PC-9 (cell line): ENCODE measurements at regions of chr7 and their contacts with region 1.

Region 1: GRCh38 chr7:132030086-132030568 is 473.7 kb upstream of the PODXL start:
- DNase-seq: peak in 1 of 2 experiments; percentile 69
- H3K4me3 ChIP-seq: no peak overlapping the region; the same call in 1 of the 2 replicates
- H3K27ac ChIP-seq: peak overlapping the region; percentile 66
- H3K4me1 ChIP-seq: peaks cover 38% of the 10 kb centered on the region
- H3K27me3 ChIP-seq: no peaks in the 10 kb centered on the region
- CTCF ChIP-seq: no peak

Region 2: GRCh38 chr7:131895541-131896173 is 134.5 kb before region 1 on chr7:
- CTCF ChIA-PET with region 1: no interaction called
- POLR2A ChIA-PET with region 1: no interaction called
- intact Hi-C with region 1: no loop called
- DNase-seq: no peak
- H3K4me3 ChIP-seq: no peak overlapping the region
- H3K27ac ChIP-seq: no peak overlapping the region
- H3K4me1 ChIP-seq: no peaks in the 10 kb centered on the region
- H3K27me3 ChIP-seq: peaks cover 73% of the 10 kb centered on the region
- CTCF ChIP-seq: no peak

Region 3: DNA sequence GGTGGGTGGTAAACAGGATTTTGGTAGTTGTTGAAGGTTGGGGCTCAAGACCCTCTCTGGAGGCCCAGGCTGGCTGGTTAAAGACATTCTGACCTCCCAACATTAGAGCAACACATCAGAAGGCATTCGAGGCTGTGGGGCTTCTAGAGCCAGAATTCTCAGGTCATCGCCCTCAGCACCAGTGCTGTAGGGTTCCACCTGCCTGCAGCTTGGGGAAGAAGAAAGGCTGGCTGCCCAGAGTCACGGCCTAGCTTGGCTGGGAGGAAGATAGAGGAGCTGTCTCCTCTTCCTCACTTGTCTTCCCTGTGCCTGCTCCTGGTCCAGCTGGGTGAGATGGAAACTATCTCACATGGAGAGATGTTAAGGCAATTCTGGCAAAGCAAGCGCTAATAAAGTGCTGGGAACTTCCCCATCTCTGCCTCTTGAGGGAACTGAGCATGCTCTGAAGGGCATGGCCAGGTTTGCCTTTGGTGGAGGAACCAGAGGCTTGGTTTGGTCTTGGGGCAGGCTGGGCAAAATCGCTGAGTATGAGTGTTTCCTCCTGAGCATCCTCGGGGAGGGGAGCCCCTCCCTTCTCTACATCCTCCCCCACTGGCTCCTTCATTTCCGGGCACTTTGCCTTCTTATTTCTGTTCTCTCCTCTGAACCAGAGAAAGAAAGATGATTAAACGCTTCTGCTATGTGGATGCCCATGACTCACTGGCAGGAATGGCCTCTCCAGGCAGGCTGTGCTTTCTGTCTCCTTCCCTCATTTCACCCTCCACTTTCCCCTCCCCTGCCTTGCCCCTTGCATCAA is 35.3 kb after region 1 on chr7:
- CTCF ChIA-PET with region 1: no interaction called
- POLR2A ChIA-PET with region 1: no interaction called
- intact Hi-C with region 1: loop called (anchors 1 kb)
- DNase-seq: peak; percentile 82 to 85
- H3K4me3 ChIP-seq: no peak overlapping the region
- H3K27ac ChIP-seq: peak overlapping the region; percentile 70
- H3K4me1 ChIP-seq: peaks cover 23% of the 10 kb centered on the region
- H3K27me3 ChIP-seq: no peaks in the 10 kb centered on the region
- CTCF ChIP-seq: no peak

Region 4: DNA sequence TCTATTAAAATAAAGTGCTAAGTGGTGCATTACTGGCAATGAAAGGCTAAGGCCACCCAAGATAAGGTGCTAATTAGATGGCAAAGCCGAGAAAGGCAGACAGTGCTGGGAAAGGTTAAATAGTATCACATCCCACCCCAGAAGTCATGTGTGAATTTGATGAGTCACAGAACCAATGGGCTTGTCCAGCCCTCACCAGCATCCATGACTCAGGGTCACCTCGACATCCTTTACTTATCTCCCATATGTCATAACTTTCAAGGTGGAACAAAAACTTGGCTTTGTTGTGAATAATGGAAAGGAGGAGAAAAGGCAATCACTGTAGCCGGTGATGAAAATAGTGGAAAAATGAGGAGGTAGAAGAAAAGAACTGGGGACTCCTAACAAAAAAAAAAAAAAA is 87.1 kb after region 1 on chr7:
- CTCF ChIA-PET with region 1: no interaction called
- POLR2A ChIA-PET with region 1: no interaction called
- intact Hi-C with region 1: loop called (anchors 1 kb)
- DNase-seq: peak; percentile 68 to 84
- H3K4me3 ChIP-seq: no peak overlapping the region
- H3K27ac ChIP-seq: peak overlapping the region; percentile 89
- H3K4me1 ChIP-seq: peaks cover 52% of the 10 kb centered on the region
- H3K27me3 ChIP-seq: no peaks in the 10 kb centered on the region
- CTCF ChIP-seq: no peak

Region 5: DNA sequence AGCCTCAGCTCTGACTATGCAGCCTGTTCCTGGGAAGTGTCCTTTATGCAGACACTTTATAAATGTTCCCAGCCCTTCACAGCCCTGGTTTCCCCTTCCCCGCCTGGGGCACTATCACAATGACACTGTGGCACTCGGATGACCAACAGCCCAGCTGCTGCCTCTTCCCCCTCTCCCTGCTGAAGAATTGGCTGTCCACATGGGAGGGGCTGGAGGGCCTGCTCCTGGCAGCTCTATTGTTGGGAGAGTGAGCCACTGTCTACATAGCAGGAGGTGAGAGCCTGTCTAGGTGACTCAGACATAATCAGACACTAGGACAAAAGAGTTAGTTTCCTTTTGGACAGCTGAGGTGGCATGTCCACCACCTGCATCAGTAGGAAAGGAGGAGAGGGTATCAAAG is 108.7 kb after region 1 on chr7:
- CTCF ChIA-PET with region 1: no interaction called
- POLR2A ChIA-PET with region 1: interaction called, 3 read pairs
- intact Hi-C with region 1: loop called (anchors 1 kb)
- DNase-seq: peak; percentile 77 to 85
- H3K4me3 ChIP-seq: no peak overlapping the region
- H3K27ac ChIP-seq: no peak overlapping the region
- H3K4me1 ChIP-seq: peaks cover 56% of the 10 kb centered on the region
- H3K27me3 ChIP-seq: no peaks in the 10 kb centered on the region
- CTCF ChIP-seq: no peak

Region 6: GRCh38 chr7:132145466-132145865 is 115.3 kb after region 1 on chr7:
- CTCF ChIA-PET with region 1: no interaction called
- POLR2A ChIA-PET with region 1: interaction called, 3 read pairs
- intact Hi-C with region 1: loop called (anchors 1 kb)
- DNase-seq: peak; percentile 75 to 89
- H3K4me3 ChIP-seq: no peak overlapping the region
- H3K27ac ChIP-seq: peak overlapping the region; percentile 33; the same call in 1 of the 2 replicates
- H3K4me1 ChIP-seq: peaks cover 28% of the 10 kb centered on the region
- H3K27me3 ChIP-seq: no peaks in the 10 kb centered on the region
- CTCF ChIP-seq: peak; percentile 51

Region 7: DNA sequence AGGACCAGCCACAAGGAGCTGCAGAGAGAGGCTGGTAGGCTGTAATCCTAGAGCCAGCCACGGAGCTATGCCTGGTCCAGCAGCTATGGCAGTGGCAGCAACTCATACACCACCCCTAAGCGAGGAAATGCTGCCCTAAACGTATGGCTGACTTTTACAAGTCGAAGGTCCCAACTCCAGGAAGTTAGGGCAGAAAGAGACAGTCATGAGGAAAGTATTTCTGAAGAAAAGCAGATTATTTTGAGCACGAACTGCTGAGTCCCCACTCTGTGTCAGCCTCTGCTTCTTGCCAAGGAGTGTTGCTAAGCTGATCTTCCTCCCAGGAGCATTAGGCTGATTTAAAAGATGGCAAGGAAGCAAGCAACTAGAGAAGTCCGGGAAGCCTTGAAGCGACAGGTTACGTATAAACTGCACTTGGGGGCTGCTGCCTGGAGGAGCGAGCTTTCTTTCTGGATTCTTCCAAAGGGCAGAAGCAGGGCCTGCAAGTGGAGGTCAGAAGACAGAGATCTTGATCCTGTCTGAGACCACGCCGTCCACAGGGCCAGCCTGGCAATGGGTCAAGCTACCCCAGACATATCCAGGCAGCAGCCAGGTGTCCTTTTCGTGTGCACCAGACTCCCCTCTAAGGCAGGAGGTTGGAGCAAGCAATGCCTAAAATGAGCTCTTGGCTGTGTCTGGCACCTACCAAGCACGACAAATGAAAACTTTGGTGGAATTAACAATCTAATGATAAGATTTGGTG is 506.7 kb after region 1 on chr7:
- CTCF ChIA-PET with region 1: no interaction called
- POLR2A ChIA-PET with region 1: no interaction called
- intact Hi-C with region 1: no loop called
- DNase-seq: no peak
- H3K4me3 ChIP-seq: no peak overlapping the region
- H3K27ac ChIP-seq: no peak overlapping the region
- H3K4me1 ChIP-seq: no peaks in the 10 kb centered on the region
- H3K27me3 ChIP-seq: peaks cover 88% of the 10 kb centered on the region
- CTCF ChIP-seq: no peak